ENCODE measurements at regions of chr18 and their contacts with region 1.

Region 1: GRCh38 chr18:36419905-36420531 is 122.5 kb downstream of the FHOD3 start:
- DNase-seq: no peak
- ATAC-seq: peak; percentile 92 to 96 (median 94)
- H3K4me3 ChIP-seq: peak overlapping the region; percentile 42
- H3K27ac ChIP-seq: peak overlapping the region; percentile 97
- H3K4me1 ChIP-seq: peaks cover 38% of the 10 kb centered on the region
- H3K27me3 ChIP-seq: no peaks in the 10 kb centered on the region
- CTCF ChIP-seq: peak; percentile 48

Region 2: DNA sequence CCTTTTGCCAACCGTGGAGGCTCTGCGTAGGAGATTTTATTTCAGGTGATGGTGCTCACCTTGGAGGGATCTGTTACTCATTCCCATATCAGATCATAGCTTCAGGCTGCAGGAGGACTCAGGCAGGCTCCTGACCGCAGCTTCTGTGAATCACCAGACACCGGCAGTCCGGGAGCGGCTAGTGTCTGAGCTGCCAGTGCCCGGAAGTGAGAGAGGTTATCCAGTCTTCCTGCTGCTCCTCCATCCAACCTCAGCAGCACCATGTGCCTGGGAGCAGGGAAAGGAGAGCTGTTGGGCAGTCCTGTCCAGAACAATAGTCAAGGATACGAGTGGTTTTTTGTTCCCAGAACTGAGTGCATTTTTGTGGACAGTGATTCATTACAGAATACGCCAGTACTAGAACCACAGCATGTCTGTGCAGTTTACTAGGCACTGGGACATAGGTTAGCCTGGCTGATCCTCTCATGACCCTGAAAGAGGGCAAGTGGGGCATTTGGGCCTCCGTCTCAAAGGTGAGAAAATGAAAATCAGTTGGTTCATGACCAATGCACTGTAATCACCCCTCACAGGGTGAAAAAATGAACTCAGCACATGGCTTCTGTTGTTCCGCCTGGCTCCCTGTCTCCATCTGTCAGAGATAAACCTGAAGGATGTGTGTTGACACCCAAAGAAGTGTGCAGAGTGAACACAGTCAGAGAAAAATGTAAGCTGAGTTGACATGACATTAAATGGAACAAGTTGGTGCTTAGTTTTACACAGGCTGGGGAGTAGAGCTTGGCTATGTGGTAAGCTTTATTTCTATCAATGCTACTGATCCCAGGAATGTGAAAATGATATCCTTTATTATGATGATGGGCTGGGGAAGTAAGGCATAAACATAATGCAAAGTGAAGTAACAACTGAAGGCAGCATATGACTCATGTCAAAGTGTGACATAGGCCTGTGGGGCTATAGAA is 110.3 kb before region 1 on chr18:
- intact Hi-C with region 1: loop called in 1 of 2 experiments (anchors 10 kb)
- DNase-seq: peak; percentile 67 to 68
- ATAC-seq: peak; percentile 63 to 89 (median 78)
- H3K4me3 ChIP-seq: no peak overlapping the region
- H3K27ac ChIP-seq: peak overlapping the region; percentile 39
- H3K4me1 ChIP-seq: peaks cover 35% of the 10 kb centered on the region
- H3K27me3 ChIP-seq: no peaks in the 10 kb centered on the region
- CTCF ChIP-seq: no peak

Region 3: GRCh38 chr18:36333414-36333813 is 86.6 kb before region 1 on chr18:
- intact Hi-C with region 1: no loop called
- DNase-seq: no peak
- ATAC-seq: no peak
- H3K4me3 ChIP-seq: no peak overlapping the region
- H3K27ac ChIP-seq: no peak overlapping the region
- H3K4me1 ChIP-seq: peaks cover 15% of the 10 kb centered on the region
- H3K27me3 ChIP-seq: no peaks in the 10 kb centered on the region
- CTCF ChIP-seq: no peak

Measured in psoas muscle (tissue), 8 donors.